Activated CD4-positive, alpha-beta T cell treated with anti-CD3 and anti-CD28 coated beads for 36 hours (primary cell): ENCODE measurements at regions of chr17 and their contacts with region 1.

Region 1: DNA sequence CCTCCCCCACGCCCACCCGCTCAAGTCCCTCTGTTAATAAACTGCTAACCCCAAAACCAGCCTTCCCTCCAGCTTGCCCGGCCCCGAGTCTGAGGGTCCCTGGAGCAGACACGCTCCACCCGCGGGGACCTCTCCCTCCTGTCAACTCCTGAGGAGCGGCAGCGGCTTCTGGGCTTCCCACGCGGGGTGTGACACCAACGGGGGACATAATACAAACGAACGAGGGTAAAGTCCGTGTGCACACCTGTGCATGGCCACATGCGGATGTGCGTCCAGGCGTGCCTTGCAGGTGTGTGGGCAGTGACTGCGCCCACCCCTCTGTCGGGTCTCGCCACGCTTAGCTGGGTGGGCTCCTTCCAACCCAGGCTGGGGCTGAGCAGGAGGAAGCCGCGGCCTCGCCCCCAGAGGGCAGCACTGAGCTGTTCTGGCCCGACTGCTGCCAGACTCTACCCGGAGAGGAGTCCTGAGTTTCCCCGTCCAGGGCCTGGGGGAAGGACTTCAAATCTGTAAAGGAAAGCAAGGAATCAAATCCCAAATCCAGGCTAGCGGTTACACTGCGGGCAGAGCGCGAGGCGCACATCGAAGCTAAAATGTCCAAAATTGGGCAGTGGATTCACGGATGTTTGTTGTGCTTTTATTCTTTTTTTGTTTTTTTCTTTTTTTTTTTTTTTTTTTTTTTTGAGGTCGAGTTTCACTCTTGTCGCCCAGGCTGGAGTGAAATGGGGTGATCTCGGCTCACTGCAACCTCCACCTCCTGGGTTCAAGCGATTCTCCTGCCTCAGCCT is 24.2 kb upstream of the KRT17 start:
- DNase-seq: peak; percentile 92
- ATAC-seq: peak; percentile 91
- H3K4me3 Mint-ChIP-seq: peak overlapping the region; percentile 50
- H3K27ac Mint-ChIP-seq: peak overlapping the region; percentile 66
- H3K4me1 Mint-ChIP-seq: peaks cover 9% of the 10 kb centered on the region
- H3K27me3 Mint-ChIP-seq: no peaks in the 10 kb centered on the region

Region 2: GRCh38 chr17:40803617-40804082 is 845.0 kb before region 1 on chr17:
- CTCF ChIA-PET with region 1: interaction called, 3 read pairs
- POLR2A ChIA-PET with region 1: no interaction called
- intact Hi-C with region 1: loop called (anchors 1 to 5 kb)
- DNase-seq: peak; percentile 89
- ATAC-seq: peak; percentile 93
- H3K4me3 Mint-ChIP-seq: no peak overlapping the region
- H3K27ac Mint-ChIP-seq: no peak overlapping the region
- H3K4me1 Mint-ChIP-seq: peaks cover 2% of the 10 kb centered on the region
- H3K27me3 Mint-ChIP-seq: peaks cover 30% of the 10 kb centered on the region

Region 3: DNA sequence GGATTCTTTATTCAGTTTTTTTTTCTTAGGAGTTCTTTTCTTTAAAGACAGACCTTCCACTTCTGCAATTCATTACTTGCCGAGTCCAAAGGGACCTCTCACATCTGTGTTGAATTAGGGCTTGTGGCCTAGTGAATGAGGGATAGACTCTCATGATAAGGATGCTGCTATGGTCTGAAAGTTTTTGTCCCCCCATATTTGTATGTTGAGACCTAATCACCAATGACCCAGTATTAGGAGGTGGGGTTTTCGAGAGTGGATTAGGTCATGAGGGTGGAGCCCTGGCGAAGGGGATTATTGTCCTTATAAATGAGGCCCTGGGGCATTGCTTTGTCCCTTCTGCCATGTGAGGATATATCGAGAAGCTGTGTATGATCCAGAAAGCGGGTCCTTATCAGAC is 791.1 kb before region 1 on chr17:
- CTCF ChIA-PET with region 1: interaction called, 10 read pairs
- POLR2A ChIA-PET with region 1: no interaction called
- intact Hi-C with region 1: loop called in 1 of 2 experiments (anchors 5 kb)
- DNase-seq: no peak
- ATAC-seq: no peak
- H3K4me3 Mint-ChIP-seq: no peak overlapping the region
- H3K27ac Mint-ChIP-seq: no peak overlapping the region
- H3K4me1 Mint-ChIP-seq: no peaks in the 10 kb centered on the region
- H3K27me3 Mint-ChIP-seq: peaks cover 14% of the 10 kb centered on the region

Region 4: DNA sequence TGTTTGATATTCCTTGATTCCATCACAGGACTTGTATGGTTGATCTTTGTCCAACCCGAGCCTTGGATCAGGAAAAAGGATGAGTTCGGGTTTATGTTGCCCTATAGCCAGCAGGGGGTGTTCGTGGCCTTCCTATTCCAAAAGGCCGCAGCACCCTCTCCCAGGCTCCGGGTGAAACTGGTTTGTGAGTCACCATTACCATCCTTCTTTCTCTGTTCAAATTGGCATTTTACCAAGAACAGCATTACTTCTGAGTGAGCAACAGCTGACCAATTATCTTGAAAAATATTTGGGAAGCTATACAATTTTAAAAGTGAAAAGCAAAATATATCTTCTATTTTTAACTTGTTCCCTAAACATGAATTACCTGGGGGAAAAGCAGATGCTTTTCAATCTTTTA is 739.3 kb before region 1 on chr17:
- CTCF ChIA-PET with region 1: interaction called, 3 read pairs
- POLR2A ChIA-PET with region 1: no interaction called
- intact Hi-C with region 1: loop called (anchors 1 to 2 kb)
- DNase-seq: peak; percentile 79
- ATAC-seq: peak; percentile 94
- H3K4me3 Mint-ChIP-seq: no peak overlapping the region
- H3K27ac Mint-ChIP-seq: no peak overlapping the region
- H3K4me1 Mint-ChIP-seq: no peaks in the 10 kb centered on the region
- H3K27me3 Mint-ChIP-seq: peaks cover 31% of the 10 kb centered on the region

Region 5: GRCh38 chr17:41486809-41487720 is 161.5 kb before region 1 on chr17:
- CTCF ChIA-PET with region 1: interaction called, 5 read pairs
- POLR2A ChIA-PET with region 1: no interaction called
- intact Hi-C with region 1: loop called in 1 of 2 experiments (anchors 2 kb)
- DNase-seq: peak; percentile 73
- ATAC-seq: peak; percentile 44
- H3K4me3 Mint-ChIP-seq: no peak overlapping the region
- H3K27ac Mint-ChIP-seq: no peak overlapping the region
- H3K4me1 Mint-ChIP-seq: peaks cover 8% of the 10 kb centered on the region
- H3K27me3 Mint-ChIP-seq: no peaks in the 10 kb centered on the region

Region 6: DNA sequence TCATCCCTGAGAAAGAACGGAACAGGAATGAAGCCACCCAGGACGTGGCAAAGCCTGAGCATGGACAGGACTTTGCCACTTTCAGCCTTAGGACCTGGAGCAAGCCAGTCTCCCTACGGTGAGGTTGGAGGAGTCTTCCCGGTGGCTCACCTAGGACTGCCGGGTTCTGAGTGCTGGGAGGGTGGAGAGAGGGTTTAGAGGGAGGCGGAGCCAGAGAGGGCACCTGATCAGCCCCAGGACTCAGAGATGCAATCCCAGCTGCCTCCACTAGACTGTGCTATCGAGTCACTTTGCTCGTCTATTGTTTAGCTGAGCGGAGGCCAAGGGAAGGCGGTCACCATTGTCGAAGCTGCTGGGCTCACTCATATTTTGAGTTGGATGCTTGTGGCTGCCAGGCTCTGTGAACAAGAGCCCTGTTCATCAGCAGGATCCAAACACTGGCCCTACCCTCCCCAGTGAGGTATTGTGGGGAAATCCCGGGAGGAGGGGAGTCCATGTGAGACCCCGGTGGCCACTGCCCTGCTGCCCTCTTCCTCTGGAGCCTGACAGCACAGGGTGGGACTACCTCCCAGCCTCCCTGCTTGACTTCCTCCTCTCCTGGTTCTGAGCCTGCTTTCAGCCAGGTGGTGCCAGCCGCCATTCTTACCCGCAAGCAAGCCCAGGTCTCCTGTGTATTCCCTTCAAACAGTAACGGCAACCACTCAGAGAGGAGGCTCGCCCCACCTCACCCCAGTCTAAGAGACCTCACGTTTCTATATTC is 68.9 kb before region 1 on chr17:
- CTCF ChIA-PET with region 1: interaction called, 10 read pairs
- POLR2A ChIA-PET with region 1: no interaction called
- intact Hi-C with region 1: loop called in 1 of 2 experiments (anchors 1 kb)
- DNase-seq: peak; percentile 89
- ATAC-seq: peak; percentile 99
- H3K4me3 Mint-ChIP-seq: no peak overlapping the region
- H3K27ac Mint-ChIP-seq: no peak overlapping the region
- H3K4me1 Mint-ChIP-seq: no peaks in the 10 kb centered on the region
- H3K27me3 Mint-ChIP-seq: peaks cover 20% of the 10 kb centered on the region

Region 7: GRCh38 chr17:41659427-41660212 is 11.0 kb after region 1 on chr17:
- CTCF ChIA-PET with region 1: interaction called, 252 read pairs
- POLR2A ChIA-PET with region 1: no interaction called
- intact Hi-C with region 1: loop called (anchors 1 kb)
- DNase-seq: no peak
- ATAC-seq: no peak
- H3K4me3 Mint-ChIP-seq: no peak overlapping the region
- H3K27ac Mint-ChIP-seq: no peak overlapping the region
- H3K4me1 Mint-ChIP-seq: peaks cover 2% of the 10 kb centered on the region
- H3K27me3 Mint-ChIP-seq: no peaks in the 10 kb centered on the region